Activated naive CD8-positive, alpha-beta T cell treated with anti-CD3 and anti-CD28 coated beads, Interleukin-2, amount 10 ng/mL, durations not matched to agents 7 days and 5 days (primary cell): ENCODE measurements at regions of chr15 and their contacts with region 1.

Region 1: DNA sequence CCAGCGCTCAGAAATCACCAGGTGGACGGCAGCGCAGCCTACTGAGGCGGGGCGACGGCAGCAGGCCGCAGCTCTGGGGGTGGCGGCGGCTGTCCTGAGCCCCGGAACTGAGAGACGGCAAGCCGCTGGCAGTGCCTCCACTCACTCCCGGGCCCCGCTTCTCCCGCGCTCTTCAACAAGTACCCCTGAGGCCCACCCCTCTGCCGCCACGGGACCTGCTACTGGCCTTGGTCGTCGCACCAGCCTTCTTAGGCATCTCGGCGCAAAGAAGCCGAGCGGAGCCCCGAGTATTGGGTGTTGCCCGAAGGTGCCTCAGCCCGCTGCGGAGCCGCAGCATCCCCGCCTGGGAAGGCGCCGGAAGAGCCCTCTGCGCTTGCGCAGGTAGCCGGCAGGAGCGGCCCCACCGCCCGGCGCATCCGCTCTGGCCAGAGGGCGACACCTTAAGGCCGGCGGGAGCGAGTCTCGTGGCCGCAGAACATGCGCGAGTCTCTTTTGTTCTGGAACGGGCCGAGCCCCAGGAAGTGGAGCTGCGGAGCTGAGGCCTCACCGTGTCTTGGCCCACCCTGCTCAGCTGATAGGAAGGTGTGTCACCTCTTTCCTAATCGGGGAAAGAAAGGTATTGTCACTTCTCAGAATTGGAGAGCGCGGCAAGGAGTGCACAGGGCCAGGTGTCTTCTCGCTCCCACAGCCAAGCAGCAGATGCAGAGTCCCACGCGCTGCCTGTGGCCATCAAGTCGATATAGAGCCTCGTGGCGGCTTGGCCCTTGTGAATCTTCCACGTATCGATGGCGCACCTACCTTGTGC is at the start of gene C15orf40:
- DNase-seq: peak; percentile 91
- ATAC-seq: peak; percentile 87
- H3K4me3 Mint-ChIP-seq: peak within 1 kb of the TSS; percentile 99
- H3K27ac Mint-ChIP-seq: peak within 1 kb of the TSS; percentile 98
- H3K4me1 Mint-ChIP-seq: peaks cover 38% of the 10 kb centered on the region
- H3K27me3 Mint-ChIP-seq: no peaks in the 10 kb centered on the region
- total RNA-seq, gene C15orf40: 28.5 to 35.4 TPM

Region 2: DNA sequence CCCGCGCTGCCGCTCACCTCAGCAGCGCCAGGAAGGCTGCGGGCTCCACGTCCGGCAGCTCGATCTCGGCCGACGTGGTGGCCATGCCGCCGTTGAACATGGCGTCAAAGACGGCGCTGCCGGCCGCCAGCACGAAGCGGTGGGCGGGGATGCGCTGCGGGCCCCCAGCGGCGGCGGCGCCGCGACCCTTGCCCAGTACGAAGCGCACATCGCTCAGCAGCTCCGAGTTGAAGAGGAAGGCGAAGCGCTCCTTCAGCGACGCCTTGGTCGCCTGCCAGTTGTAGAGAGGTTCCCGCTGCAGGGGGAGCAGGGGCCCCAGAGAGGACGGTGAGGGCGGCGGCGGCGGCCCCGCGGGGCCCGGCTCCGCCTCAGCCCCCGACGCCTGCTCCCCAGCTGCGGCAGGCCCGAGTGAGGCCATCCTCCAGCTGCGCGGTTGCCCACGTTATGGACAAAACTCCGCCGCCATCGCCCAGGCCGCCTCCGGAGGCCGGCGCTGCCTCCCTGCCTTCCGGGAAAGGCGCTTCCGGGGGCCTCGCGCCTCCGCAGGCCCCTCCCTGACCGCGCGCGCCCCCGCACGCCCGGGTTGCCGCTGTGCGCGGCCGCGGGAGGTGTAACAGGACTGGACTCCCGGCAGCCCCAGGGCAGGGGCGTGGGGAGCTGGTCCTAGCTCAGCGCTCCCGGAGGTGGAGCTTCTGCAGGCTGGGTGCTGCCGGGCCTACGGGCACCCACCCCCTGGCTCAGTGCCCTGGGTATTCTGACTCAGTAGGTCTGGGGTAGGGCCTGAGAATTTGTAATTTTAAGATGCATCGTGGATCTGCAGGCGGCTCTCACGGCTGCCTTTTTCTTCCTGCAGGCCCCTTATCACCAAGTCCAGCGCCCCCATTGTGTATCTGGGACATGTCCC is 55.5 kb after region 1 on chr15 and contains the start of gene BTBD1:
- POLR2A ChIA-PET with region 1: interaction called, 22 read pairs
- DNase-seq: peak; percentile 93
- ATAC-seq: peak; percentile 87
- H3K4me3 Mint-ChIP-seq: peak within 1 kb of the TSS; percentile 69
- H3K27ac Mint-ChIP-seq: peak within 1 kb of the TSS; percentile 77
- H3K4me1 Mint-ChIP-seq: peaks cover 14% of the 10 kb centered on the region
- H3K27me3 Mint-ChIP-seq: no peaks in the 10 kb centered on the region
- total RNA-seq, gene BTBD1: 56.3 to 59.2 TPM

Region 3: GRCh38 chr15:83108266-83109226 is 97.1 kb after region 1 on chr15:
- POLR2A ChIA-PET with region 1: interaction called, 25 read pairs
- DNase-seq: peak; percentile 63
- ATAC-seq: peak; percentile 82
- H3K4me3 Mint-ChIP-seq: peak overlapping the region; percentile 94
- H3K27ac Mint-ChIP-seq: peak overlapping the region; percentile 90
- H3K4me1 Mint-ChIP-seq: peaks cover 41% of the 10 kb centered on the region
- H3K27me3 Mint-ChIP-seq: peaks cover 10% of the 10 kb centered on the region